Calu3 (cell line): ENCODE measurements at regions of chr10 and their contacts with region 1.

Region 1: DNA sequence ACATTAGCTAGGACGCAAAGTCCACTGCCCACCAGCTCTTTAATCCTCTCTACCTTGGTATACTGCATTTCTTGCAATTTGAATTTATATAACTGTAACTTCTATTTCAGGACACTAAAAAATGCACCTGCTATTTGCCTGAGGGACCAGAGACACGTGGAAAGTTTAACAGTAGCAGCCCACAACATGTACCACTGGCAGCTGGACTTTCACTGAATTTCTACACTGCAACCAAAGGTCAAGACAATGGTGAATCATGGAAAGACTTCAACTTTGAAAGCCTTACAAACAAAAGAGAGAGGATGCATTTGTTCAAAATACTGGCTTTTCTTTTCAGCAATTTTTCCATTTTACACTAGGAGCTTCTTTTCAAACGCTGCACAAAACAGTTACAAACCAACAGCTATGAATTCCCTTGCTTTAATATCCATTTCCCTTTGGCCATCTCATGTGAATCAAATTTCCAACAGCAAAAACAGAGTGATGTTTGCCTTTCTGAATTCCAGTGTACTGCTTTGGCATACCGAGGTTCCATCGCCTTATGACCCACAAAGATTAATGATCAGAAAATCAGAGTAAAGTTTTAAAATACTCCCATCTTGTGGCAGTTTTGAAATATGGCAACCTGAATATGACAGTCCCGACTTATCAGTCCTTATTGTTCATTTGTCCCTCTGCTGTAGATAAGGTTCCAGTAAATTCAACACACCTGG is 29.9 kb upstream of the HNRNPH3 start:
- DNase-seq: peak; percentile 16
- H3K4me3 Mint-ChIP-seq: no peak overlapping the region
- H3K27ac Mint-ChIP-seq: no peak overlapping the region
- H3K4me1 Mint-ChIP-seq: peaks cover 31% of the 10 kb centered on the region
- H3K27me3 Mint-ChIP-seq: no peaks in the 10 kb centered on the region
- CTCF ChIP-seq: peak; percentile 24

Region 2: GRCh38 chr10:67858971-67859370 is 443.0 kb before region 1 on chr10:
- CTCF ChIA-PET with region 1: interaction called, 6 read pairs
- intact Hi-C with region 1: loop called (anchors 5 kb)
- DNase-seq: no peak
- H3K4me3 Mint-ChIP-seq: no peak overlapping the region
- H3K27ac Mint-ChIP-seq: no peak overlapping the region
- H3K4me1 Mint-ChIP-seq: no peaks in the 10 kb centered on the region
- H3K27me3 Mint-ChIP-seq: no peaks in the 10 kb centered on the region
- CTCF ChIP-seq: no peak

Region 3: DNA sequence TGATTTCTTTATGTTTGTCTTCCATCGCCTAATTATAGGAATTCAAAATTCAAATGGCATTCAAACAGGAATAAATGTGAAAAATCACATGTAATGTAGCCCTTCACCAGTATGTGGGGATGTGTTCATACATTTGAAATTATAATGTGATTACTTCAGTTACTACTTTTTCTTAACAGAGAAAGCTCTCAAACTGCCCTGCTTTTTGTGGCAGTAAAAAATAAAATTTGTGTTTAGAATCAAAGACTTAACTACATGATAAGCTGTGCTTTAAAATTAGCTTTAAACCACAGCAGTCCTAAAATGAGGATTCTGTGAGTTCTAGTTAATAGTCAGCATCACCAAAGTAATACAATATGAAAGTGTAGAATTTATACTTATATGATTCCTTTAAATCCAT is 219.1 kb before region 1 on chr10:
- CTCF ChIA-PET with region 1: no interaction called
- intact Hi-C with region 1: loop called (anchors 2 kb)
- DNase-seq: no peak
- H3K4me3 Mint-ChIP-seq: no peak overlapping the region
- H3K27ac Mint-ChIP-seq: peak overlapping the region; percentile 36
- H3K4me1 Mint-ChIP-seq: peaks cover 29% of the 10 kb centered on the region
- H3K27me3 Mint-ChIP-seq: no peaks in the 10 kb centered on the region
- CTCF ChIP-seq: peak; percentile 23

Region 4: DNA sequence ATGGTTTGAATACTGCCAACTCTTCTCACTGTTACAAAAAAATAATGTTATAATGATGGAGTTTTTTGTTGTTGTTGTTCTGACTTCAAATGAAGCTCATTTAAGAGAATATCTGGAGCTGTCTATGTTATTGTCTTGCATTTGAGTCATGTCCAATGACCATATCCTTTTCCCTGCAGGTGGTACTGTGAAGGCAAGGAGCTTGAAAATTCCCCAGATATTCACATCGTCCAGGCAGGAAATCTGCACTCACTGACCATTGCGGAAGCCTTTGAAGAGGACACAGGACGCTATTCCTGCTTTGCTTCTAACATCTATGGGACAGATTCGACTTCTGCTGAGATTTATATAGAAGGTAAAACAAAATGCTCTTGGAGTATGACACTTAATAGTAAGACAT is 159.2 kb before region 1 on chr10:
- CTCF ChIA-PET with region 1: no interaction called
- intact Hi-C with region 1: no loop called
- DNase-seq: no peak
- H3K4me3 Mint-ChIP-seq: no peak overlapping the region
- H3K27ac Mint-ChIP-seq: no peak overlapping the region
- H3K4me1 Mint-ChIP-seq: peaks cover 32% of the 10 kb centered on the region
- H3K27me3 Mint-ChIP-seq: no peaks in the 10 kb centered on the region
- CTCF ChIP-seq: no peak